B cell (primary cell): ENCODE measurements at regions of chr5 and their contacts with region 1.

Region 1: DNA sequence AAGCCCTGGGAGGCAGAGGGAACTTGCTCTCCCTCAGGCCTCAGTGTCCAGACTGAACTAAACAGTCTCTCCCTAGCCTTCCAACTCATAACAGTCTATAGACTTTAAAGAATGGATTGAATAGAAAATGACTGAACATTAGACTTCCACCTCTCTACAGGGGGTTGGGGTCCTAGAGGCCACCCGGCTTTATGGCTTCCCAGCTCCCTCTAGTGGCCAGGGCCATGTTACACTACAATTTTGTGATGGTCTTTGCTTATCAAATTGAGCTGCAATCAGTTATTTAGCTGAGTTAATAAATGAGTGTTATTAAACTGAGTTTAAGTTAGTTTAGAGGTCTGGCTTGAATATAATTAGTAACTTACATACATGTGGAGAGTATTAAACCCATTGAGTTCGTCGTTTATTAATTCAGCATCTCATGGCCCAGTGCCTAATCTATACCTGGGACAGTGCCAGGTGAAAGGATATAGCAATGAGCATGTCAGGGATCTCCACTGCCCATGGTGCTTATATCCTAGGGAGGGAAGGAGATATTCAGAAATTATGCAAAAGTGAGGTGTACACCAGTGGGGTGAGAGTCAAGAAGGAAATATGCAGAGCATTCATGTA is 105.2 kb downstream of the SH3TC2 start:
- DNase-seq: peak; percentile 68
- ATAC-seq: peak; percentile 69
- H3K4me3 ChIP-seq: no peak overlapping the region
- H3K4me3 Mint-ChIP-seq: no peak overlapping the region
- H3K27ac ChIP-seq: no peak overlapping the region
- H3K27ac Mint-ChIP-seq: no peak overlapping the region
- H3K4me1 ChIP-seq: peaks cover 4 to 5% of the 10 kb centered on the region in 2 donors
- H3K4me1 Mint-ChIP-seq: peaks cover 3% of the 10 kb centered on the region
- H3K27me3 ChIP-seq: no peaks in the 10 kb centered on the region
- H3K27me3 Mint-ChIP-seq: no peaks in the 10 kb centered on the region
- CTCF ChIP-seq: peak; percentile 97

Region 2: DNA sequence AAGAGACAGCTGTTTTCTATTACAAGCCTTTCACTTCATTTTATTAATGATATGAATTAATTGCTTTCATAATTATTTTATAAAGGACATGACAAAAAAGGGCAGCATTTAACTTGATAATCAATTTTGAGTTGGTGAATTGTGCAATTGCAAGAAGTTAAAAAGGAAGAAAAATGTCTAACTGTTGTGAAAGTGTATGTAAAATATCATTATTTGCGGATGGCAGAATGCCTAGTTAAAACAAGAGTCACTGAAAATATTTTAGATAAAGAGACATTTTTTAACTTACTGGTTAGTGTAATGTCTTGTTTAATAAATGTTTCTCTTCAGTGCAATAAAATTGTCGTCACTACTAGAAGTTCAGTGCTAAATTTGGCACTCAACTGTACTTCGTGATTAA is 245.7 kb before region 1 on chr5:
- CTCF ChIA-PET with region 1: no interaction called
- POLR2A ChIA-PET with region 1: no interaction called
- intact Hi-C with region 1: no loop called
- DNase-seq: no peak
- ATAC-seq: no peak
- H3K4me3 ChIP-seq: no peak overlapping the region
- H3K4me3 Mint-ChIP-seq: no peak overlapping the region
- H3K27ac ChIP-seq: no peak overlapping the region
- H3K27ac Mint-ChIP-seq: no peak overlapping the region
- H3K4me1 ChIP-seq: no peaks in the 10 kb centered on the region
- H3K4me1 Mint-ChIP-seq: no peaks in the 10 kb centered on the region
- H3K27me3 ChIP-seq: peaks cover 0 to 4% (median 0%) of the 10 kb centered on the region in 4 experiments
- H3K27me3 Mint-ChIP-seq: peaks cover 31% of the 10 kb centered on the region
- CTCF ChIP-seq: no peak

Region 3: DNA sequence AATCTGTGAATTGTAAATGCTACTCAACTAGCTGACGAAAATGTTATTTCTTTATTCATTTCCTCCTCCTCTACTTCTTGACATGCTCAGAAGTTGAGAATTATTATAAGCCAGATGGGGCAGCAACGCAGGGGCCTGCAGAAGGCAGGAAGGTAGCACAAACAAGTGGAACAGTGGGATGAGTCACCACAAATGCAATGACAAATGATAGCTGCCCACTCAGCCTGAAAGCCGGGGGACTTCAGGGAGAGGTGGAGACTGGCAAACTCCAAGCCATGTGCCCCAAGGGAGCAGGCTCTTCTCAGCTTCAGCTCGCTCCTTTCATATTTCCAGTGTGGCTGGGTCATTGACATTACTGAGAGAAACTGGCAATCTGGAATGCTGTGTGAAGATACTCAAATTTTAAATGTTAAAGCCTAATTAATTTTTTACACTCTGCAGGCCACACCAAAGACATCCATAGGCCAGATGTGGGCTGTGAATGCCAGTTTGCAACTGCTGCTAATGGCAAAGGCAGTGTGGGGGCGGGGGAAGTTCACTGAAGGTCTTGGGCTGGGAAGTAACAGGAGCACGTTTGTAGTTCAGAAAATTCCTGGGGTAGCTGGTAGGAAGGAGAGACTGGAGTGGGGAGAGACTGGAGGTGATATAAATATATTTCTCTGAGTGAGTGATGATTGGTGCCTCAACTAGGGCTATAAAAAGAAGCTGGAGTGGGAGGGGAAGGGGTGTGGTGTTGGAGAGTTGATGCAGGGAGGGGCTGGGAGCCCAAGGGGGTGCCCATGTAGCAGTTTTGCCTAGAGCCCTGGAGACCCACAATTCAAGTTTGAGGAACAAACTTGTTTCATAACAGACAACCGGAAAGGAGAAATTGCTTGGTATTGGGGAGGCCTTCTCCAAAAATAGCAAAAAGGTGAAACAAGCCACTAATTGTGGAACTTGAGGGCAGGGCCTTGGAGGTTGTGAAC is 152.1 kb before region 1 on chr5:
- CTCF ChIA-PET with region 1: interaction called, 14 read pairs
- POLR2A ChIA-PET with region 1: no interaction called
- intact Hi-C with region 1: no loop called
- DNase-seq: peak; percentile 42
- ATAC-seq: no peak
- H3K4me3 ChIP-seq: peak overlapping the region in 1 of 5 experiments; percentile 6
- H3K4me3 Mint-ChIP-seq: peak overlapping the region; percentile 51
- H3K27ac ChIP-seq: peak overlapping the region; percentile 40 to 59
- H3K27ac Mint-ChIP-seq: peak overlapping the region; percentile 76
- H3K4me1 ChIP-seq: peaks cover 48 to 58% of the 10 kb centered on the region in 2 donors
- H3K4me1 Mint-ChIP-seq: peaks cover 52% of the 10 kb centered on the region
- H3K27me3 ChIP-seq: no peaks in the 10 kb centered on the region
- H3K27me3 Mint-ChIP-seq: no peaks in the 10 kb centered on the region
- CTCF ChIP-seq: no peak

Region 4: DNA sequence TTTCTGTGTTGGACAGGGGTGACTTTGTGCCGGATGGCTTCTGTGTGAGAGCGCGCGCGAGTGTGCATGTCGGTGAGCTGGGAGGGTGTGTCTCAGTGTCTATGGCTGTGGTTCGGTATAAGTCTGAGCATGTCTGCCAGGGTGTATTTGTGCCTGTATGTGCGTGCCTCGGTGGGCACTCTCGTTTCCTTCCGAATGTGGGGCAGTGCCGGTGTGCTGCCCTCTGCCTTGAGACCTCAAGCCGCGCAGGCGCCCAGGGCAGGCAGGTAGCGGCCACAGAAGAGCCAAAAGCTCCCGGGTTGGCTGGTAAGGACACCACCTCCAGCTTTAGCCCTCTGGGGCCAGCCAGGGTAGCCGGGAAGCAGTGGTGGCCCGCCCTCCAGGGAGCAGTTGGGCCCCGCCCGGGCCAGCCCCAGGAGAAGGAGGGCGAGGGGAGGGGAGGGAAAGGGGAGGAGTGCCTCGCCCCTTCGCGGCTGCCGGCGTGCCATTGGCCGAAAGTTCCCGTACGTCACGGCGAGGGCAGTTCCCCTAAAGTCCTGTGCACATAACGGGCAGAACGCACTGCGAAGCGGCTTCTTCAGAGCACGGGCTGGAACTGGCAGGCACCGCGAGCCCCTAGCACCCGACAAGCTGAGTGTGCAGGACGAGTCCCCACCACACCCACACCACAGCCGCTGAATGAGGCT is 131.5 kb before region 1 on chr5 and contains the start of gene ADRB2:
- CTCF ChIA-PET with region 1: interaction called, 44 read pairs
- POLR2A ChIA-PET with region 1: no interaction called
- intact Hi-C with region 1: loop called (anchors 1 kb)
- DNase-seq: peak; percentile 94
- ATAC-seq: peak; percentile 89
- H3K4me3 ChIP-seq: peak within 1 kb of the TSS; percentile 61 to 91 (median 86)
- H3K4me3 Mint-ChIP-seq: peak within 1 kb of the TSS; percentile 94
- H3K27ac ChIP-seq: peak within 1 kb of the TSS; percentile 76 to 91
- H3K27ac Mint-ChIP-seq: peak within 1 kb of the TSS; percentile 94
- H3K4me1 ChIP-seq: peaks cover 54 to 57% of the 10 kb centered on the region in 2 donors
- H3K4me1 Mint-ChIP-seq: peaks cover 74% of the 10 kb centered on the region
- H3K27me3 ChIP-seq: no peaks in the 10 kb centered on the region
- H3K27me3 Mint-ChIP-seq: no peaks in the 10 kb centered on the region
- CTCF ChIP-seq: no peak
- total RNA-seq, gene ADRB2: 11.4 and 12.4 TPM in 2 replicates

Region 5: DNA sequence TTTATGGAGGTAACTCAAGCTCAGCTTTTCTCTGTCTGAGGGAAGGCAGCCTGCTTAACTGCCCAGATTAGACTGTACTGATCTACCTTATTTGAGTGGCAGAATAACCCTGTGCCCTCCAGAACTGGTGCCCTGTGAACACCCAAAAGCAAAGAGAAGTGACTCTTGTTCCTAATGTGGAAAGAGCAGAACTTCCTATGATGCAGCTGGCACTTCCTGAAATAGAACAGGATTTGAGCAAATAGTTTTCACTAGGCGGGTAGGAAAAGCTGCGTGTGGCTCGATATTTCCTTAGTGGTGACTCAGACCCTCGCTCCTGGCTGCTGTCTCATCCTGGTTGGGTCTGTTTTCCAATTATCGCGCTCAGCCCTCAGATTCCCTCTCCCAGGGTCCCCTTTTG is 15.3 kb after region 1 on chr5:
- CTCF ChIA-PET with region 1: interaction called, 21 read pairs
- POLR2A ChIA-PET with region 1: no interaction called
- intact Hi-C with region 1: no loop called
- DNase-seq: no peak
- ATAC-seq: no peak
- H3K4me3 ChIP-seq: no peak overlapping the region
- H3K4me3 Mint-ChIP-seq: no peak overlapping the region
- H3K27ac ChIP-seq: no peak overlapping the region
- H3K27ac Mint-ChIP-seq: no peak overlapping the region
- H3K4me1 ChIP-seq: no peaks in the 10 kb centered on the region
- H3K4me1 Mint-ChIP-seq: no peaks in the 10 kb centered on the region
- H3K27me3 ChIP-seq: peaks cover 0 to 6% (median 0%) of the 10 kb centered on the region in 4 experiments
- H3K27me3 Mint-ChIP-seq: peaks cover 26% of the 10 kb centered on the region
- CTCF ChIP-seq: no peak

Region 6: DNA sequence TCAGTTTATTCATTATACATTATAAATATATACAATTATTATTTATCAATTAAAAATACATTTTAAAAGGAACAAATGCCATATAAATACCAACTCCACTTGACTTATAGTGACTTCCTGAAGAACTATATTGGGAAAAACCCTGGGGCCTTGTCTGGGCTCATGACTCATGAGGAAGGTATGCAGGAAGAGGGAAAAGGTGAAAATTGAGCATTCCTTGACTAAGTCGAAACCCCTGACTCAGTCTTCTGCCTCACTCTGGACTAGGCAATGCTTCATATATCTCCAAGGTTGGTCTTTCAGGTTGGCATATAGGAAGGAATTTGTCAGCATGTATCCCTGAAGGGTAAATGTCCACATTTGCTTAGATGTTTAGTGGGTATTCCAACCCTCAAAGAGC is 26.6 kb after region 1 on chr5:
- CTCF ChIA-PET with region 1: interaction called, 10 read pairs
- POLR2A ChIA-PET with region 1: interaction called, 13 read pairs
- intact Hi-C with region 1: no loop called
- DNase-seq: no peak
- ATAC-seq: no peak
- H3K4me3 ChIP-seq: no peak overlapping the region
- H3K4me3 Mint-ChIP-seq: no peak overlapping the region
- H3K27ac ChIP-seq: no peak overlapping the region
- H3K27ac Mint-ChIP-seq: no peak overlapping the region
- H3K4me1 ChIP-seq: no peaks in the 10 kb centered on the region
- H3K4me1 Mint-ChIP-seq: no peaks in the 10 kb centered on the region
- H3K27me3 ChIP-seq: peaks cover 0 to 4% (median 2%) of the 10 kb centered on the region in 4 experiments
- H3K27me3 Mint-ChIP-seq: peaks cover 29% of the 10 kb centered on the region
- CTCF ChIP-seq: no peak

Region 7: GRCh38 chr5:149162401-149163084 is 204.8 kb after region 1 on chr5:
- CTCF ChIA-PET with region 1: no interaction called
- POLR2A ChIA-PET with region 1: no interaction called
- intact Hi-C with region 1: no loop called
- DNase-seq: no peak
- ATAC-seq: no peak
- H3K4me3 ChIP-seq: no peak overlapping the region
- H3K4me3 Mint-ChIP-seq: no peak overlapping the region
- H3K27ac ChIP-seq: no peak overlapping the region
- H3K27ac Mint-ChIP-seq: no peak overlapping the region
- H3K4me1 ChIP-seq: no peaks in the 10 kb centered on the region
- H3K4me1 Mint-ChIP-seq: no peaks in the 10 kb centered on the region
- H3K27me3 ChIP-seq: no peaks in the 10 kb centered on the region
- H3K27me3 Mint-ChIP-seq: peaks cover 21% of the 10 kb centered on the region
- CTCF ChIP-seq: no peak